Heart left ventricle (tissue), 16 donors: ENCODE measurements at regions of chr9 and their contacts with region 1.

Region 1: GRCh38 chr9:91515074-91515687 is 91.5 kb upstream of the NFIL3 start:
- DNase-seq: peak in 3 of 5 donors; percentile 43 to 76 (median 44)
- ATAC-seq: peak in 3 of 4 donors; percentile 69 to 95 (median 71)
- H3K4me3 ChIP-seq: peak overlapping the region in 7 of 12 donors; percentile 14 to 40 (median 26)
- H3K27ac ChIP-seq: peak overlapping the region in 1 of 12 donors; percentile 8
- H3K4me1 ChIP-seq: peaks cover 0 to 5% (median 0%) of the 10 kb centered on the region in 12 donors
- H3K27me3 ChIP-seq: no peaks in the 10 kb centered on the region
- CTCF ChIP-seq: no peak
- POLR2A ChIP-seq: no peak

Region 2: GRCh38 chr9:91465420-91465819 is 49.8 kb before region 1 on chr9:
- intact Hi-C with region 1: loop called in 1 of 10 experiments (anchors 10 kb)
- DNase-seq: no peak
- ATAC-seq: no peak
- H3K4me3 ChIP-seq: no peak overlapping the region
- H3K27ac ChIP-seq: no peak overlapping the region
- H3K4me1 ChIP-seq: no peaks in the 10 kb centered on the region
- H3K27me3 ChIP-seq: no peaks in the 10 kb centered on the region
- CTCF ChIP-seq: no peak
- POLR2A ChIP-seq: no peak

Region 3: DNA sequence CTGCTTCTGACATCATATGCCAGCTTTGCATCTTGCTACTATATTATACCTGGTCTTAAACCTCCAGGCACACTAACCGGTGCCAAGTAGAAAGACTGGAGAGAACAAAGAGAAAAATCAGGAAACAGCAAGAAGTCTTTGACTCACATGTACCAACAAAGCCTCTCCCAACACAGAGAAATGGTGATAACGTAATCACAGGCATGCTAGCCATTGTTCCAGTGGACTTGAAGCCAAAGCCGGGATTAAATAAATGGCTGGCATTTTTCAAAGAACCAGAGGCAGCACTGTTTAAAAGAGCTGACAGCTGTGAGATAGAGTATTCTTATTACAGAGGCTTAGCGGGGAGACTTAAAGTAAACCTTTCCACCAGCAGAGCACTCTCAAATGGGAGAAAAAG is 56.9 kb after region 1 on chr9:
- intact Hi-C with region 1: no loop called
- DNase-seq: no peak
- ATAC-seq: peak; percentile 57 to 77 (median 65)
- H3K4me3 ChIP-seq: no peak overlapping the region
- H3K27ac ChIP-seq: peak overlapping the region in 4 of 12 donors; percentile 12 to 67 (median 22)
- H3K4me1 ChIP-seq: peaks cover 0 to 5% (median 0%) of the 10 kb centered on the region in 12 donors
- H3K27me3 ChIP-seq: no peaks in the 10 kb centered on the region
- CTCF ChIP-seq: no peak
- POLR2A ChIP-seq: no peak

Region 4: GRCh38 chr9:91589101-91589553 is 73.9 kb after region 1 on chr9:
- intact Hi-C with region 1: no loop called
- DNase-seq: peak in 4 of 5 donors; percentile 18 to 48 (median 36)
- ATAC-seq: peak in 2 of 4 donors; percentile 37 to 58
- H3K4me3 ChIP-seq: no peak overlapping the region
- H3K27ac ChIP-seq: no peak overlapping the region
- H3K4me1 ChIP-seq: no peaks in the 10 kb centered on the region
- H3K27me3 ChIP-seq: no peaks in the 10 kb centered on the region
- CTCF ChIP-seq: no peak
- POLR2A ChIP-seq: no peak